ENCODE measurements at regions of chr6 and their contacts with region 1.

Region 1: DNA sequence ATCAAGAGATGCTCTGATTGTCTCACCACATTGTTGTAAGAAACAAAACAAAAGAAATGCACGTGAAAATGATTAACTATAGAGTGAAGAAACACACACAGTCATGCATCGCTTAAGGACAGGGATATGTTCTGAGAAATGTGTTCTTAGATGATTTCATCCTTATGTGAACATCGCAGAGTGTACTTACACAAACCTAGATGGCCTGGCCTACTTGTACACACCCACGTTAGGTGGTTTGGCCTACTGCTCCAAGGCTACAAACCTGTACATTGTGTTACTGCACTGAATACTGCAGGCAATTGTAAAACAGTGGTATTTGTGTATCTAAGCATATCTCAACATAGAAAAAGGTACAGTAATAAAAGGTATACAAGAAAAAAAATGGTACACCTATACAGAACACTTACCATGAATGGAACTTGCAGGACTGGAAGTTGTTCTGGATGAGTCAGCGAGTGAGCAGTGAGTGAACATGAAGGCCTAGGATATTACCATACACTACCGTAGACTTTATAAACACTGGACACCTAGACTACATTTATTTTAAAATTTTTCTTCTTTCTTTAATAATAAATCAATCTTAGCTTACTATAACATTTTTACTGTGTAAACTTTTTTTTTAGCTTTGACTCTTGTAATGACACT is 48.6 kb downstream of the FKBP5 start:
- DNase-seq: no peak
- ATAC-seq: no peak
- H3K4me3 ChIP-seq: no peak overlapping the region
- H3K27ac ChIP-seq: no peak overlapping the region
- H3K4me1 ChIP-seq: peaks cover 0 to 23% (median 0%) of the 10 kb centered on the region in 12 donors
- H3K27me3 ChIP-seq: no peaks in the 10 kb centered on the region
- CTCF ChIP-seq: no peak
- POLR2A ChIP-seq: no peak

Region 2: DNA sequence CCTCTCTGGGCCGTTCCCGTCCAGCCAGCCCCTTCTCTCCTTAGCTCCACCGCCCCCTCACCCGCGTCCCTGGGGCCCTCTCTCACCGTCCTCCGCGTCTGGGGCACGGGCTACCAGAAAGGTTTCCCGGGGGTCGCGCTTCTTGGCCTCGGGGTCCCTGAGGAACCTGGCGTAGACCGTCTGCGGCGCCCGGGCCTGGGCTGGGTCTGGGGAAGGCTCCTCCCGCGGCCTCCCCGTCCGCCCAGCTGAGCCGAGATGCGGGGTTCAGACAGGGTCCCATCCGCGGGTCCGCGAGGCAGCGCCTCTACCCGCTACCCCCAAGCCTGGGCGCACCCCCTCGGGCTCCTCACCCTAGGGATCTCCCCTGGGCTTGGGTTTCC is 128.6 kb before region 1 on chr6:
- intact Hi-C with region 1: loop called in 1 of 10 experiments (anchors 10 kb)
- DNase-seq: peak in 1 of 5 donors; percentile 42
- ATAC-seq: peak in 1 of 4 donors; percentile 24
- H3K4me3 ChIP-seq: peak overlapping the region in 7 of 12 donors; percentile 3 to 34 (median 24)
- H3K27ac ChIP-seq: no peak overlapping the region
- H3K4me1 ChIP-seq: peaks cover 0 to 11% (median 0%) of the 10 kb centered on the region in 12 donors
- H3K27me3 ChIP-seq: peaks cover 0 to 46% (median 10%) of the 10 kb centered on the region in 9 donors
- CTCF ChIP-seq: no peak
- POLR2A ChIP-seq: no peak

Region 3: DNA sequence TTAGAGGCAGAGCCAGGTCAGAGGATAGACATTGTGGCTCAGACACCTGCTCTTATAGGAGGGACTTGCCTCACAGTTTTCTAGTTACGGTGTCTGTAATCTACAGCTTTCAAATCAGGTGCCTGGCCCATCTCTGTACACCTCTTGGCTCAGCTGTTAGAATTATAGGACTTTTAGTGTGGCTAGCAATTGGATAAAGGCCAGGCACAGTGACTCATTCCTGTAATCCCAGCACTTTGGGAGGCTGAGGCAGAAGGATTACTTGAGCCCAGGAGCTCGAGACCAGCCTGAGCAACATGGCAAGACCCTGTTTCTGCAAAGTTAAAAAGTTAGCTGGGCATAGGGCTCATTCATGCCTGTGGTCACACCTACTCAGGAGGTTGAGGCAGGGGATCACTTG is 576.4 kb after region 1 on chr6:
- intact Hi-C with region 1: no loop called
- DNase-seq: no peak
- ATAC-seq: peak in 1 of 4 donors; percentile 24
- H3K4me3 ChIP-seq: no peak overlapping the region
- H3K27ac ChIP-seq: no peak overlapping the region
- H3K4me1 ChIP-seq: peaks cover 0 to 19% (median 0%) of the 10 kb centered on the region in 12 donors
- H3K27me3 ChIP-seq: no peaks in the 10 kb centered on the region
- CTCF ChIP-seq: no peak
- POLR2A ChIP-seq: no peak

Measured in heart left ventricle (tissue), 16 donors.